CD4-positive, alpha-beta memory T cell (primary cell): ENCODE measurements at regions of chr9 and their contacts with region 1.

Region 1: DNA sequence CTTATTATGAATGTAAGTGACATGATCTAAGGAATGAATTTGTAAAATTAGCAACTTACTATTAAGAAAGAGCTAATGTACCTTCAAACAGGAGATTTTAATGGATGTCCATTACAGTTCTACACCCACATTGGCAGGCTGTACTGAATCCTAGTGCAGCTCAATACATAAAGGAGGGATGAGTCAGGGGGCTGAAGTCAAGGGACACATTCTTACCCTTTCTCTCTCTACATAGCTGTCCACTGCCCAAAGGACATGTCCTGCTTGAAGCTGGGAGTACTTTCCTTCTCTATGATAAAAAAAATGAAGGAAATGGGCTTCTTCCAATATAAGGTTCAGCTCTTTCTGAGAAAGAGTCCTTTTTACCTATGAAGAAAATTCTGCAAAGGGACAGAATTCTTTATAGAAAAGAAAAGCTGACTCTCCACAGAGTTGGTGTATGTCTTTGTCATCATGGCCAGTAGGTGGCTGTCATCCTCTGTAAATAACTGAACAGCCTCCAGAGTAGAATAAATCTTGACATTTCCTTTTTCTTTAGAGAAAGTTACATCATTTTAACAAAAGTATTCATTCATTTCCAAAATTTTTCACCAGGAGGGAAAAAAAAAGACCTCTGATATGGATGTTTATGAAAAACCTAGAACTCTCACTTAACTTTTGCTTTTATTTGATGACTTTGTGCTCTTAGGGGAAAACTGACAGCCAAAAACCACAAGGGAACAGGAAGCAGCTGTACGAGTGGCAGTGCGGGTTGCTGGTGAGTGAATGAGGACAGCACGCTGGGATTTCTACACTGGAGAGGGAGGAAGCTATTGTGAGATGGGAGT is 13.1 kb upstream of the IFNA14 start:
- DNase-seq: peak; percentile 8 to 60 (median 22)
- H3K4me3 ChIP-seq: no peak overlapping the region
- H3K4me3 Mint-ChIP-seq: peak overlapping the region in 3 of 8 donors; percentile 3 to 64 (median 54)
- H3K27ac ChIP-seq: no peak overlapping the region
- H3K27ac Mint-ChIP-seq: no peak overlapping the region
- H3K4me1 ChIP-seq: peaks cover 7% of the 10 kb centered on the region
- H3K4me1 Mint-ChIP-seq: peaks cover 3 to 6% (median 5%) of the 10 kb centered on the region in 4 donors
- H3K27me3 ChIP-seq: no peaks in the 10 kb centered on the region
- H3K27me3 Mint-ChIP-seq: peaks cover 5 to 12% of the 10 kb centered on the region in 2 donors

Region 2: GRCh38 chr9:21234153-21234687 is 18.7 kb before region 1 on chr9:
- CTCF ChIA-PET with region 1: interaction called, 18 read pairs
- POLR2A ChIA-PET with region 1: no interaction called
- intact Hi-C with region 1: no loop called
- DNase-seq: no peak
- H3K4me3 ChIP-seq: no peak overlapping the region
- H3K4me3 Mint-ChIP-seq: no peak overlapping the region
- H3K27ac ChIP-seq: no peak overlapping the region
- H3K27ac Mint-ChIP-seq: peak overlapping the region in 1 of 7 donors; percentile 11
- H3K4me1 ChIP-seq: peaks cover 5% of the 10 kb centered on the region
- H3K4me1 Mint-ChIP-seq: peaks cover 4 to 12% (median 7%) of the 10 kb centered on the region in 4 donors
- H3K27me3 ChIP-seq: no peaks in the 10 kb centered on the region
- H3K27me3 Mint-ChIP-seq: peaks cover 2 to 4% of the 10 kb centered on the region in 2 donors

Region 3: DNA sequence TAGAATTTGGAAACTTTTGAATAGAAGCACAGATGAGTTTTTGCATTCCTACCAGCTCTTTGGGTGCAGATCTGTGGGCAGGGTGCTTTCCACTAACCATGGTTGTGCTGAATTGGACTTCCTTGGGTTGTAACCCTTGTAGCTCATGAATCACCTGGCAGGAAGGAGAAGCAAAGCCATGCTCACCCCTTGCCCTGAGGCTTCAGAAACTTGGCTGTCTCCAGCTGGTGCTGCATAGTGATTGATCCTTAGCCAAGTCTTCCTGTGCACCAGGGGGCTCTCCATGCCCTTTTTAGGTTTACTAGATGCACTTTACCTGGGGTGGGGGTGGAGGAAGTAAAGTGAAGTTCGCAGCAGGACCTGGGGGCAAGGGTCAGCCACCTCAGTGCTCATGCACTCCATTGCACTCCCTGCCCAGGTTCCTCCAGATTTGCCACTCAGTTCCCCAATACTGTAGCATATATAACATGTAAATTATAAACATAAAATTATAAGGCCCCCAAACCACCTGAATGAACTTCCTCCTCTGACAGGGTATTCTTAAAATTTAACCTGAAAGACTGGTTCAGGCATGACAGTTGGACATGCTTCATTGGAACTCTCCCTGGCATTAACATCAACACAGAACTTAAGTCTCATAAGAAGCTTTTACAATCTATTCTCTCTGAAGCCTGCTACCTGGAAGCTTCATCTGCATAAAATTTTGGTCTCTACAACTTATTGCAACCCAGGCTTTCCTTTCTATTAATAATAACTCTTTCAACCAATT is 12.7 kb after region 1 on chr9:
- CTCF ChIA-PET with region 1: interaction called, 10 read pairs
- POLR2A ChIA-PET with region 1: no interaction called
- intact Hi-C with region 1: no loop called
- DNase-seq: no peak
- H3K4me3 ChIP-seq: no peak overlapping the region
- H3K4me3 Mint-ChIP-seq: no peak overlapping the region
- H3K27ac ChIP-seq: no peak overlapping the region
- H3K27ac Mint-ChIP-seq: peak overlapping the region in 1 of 7 donors; percentile 62
- H3K4me1 ChIP-seq: no peaks in the 10 kb centered on the region
- H3K4me1 Mint-ChIP-seq: peaks cover 0 to 5% (median 4%) of the 10 kb centered on the region in 4 donors
- H3K27me3 ChIP-seq: no peaks in the 10 kb centered on the region
- H3K27me3 Mint-ChIP-seq: peaks cover 2 to 3% of the 10 kb centered on the region in 2 donors